Activated naive CD4-positive, alpha-beta T cell treated with anti-CD3 and anti-CD28 coated beads for 36 hours (primary cell): ENCODE measurements at regions of chr1 and their contacts with region 1.

Region 1: GRCh38 chr1:212857992-212858460 is at the start of gene FLVCR1:
- DNase-seq: peak; percentile 98
- H3K4me3 Mint-ChIP-seq: peak within 1 kb of the TSS; percentile 97
- H3K27ac Mint-ChIP-seq: peak within 1 kb of the TSS; percentile 88
- H3K4me1 Mint-ChIP-seq: peaks cover 11% of the 10 kb centered on the region
- H3K27me3 Mint-ChIP-seq: no peaks in the 10 kb centered on the region
- total RNA-seq, gene FLVCR1: 6.0 to 7.3 TPM

Region 2: GRCh38 chr1:211258756-211259637 is 1599.0 kb before region 1 on chr1 and contains the start of gene RCOR3:
- CTCF ChIA-PET with region 1: no interaction called
- intact Hi-C with region 1: loop called (anchors 2 kb)
- DNase-seq: peak; percentile 93
- H3K4me3 Mint-ChIP-seq: peak within 1 kb of the TSS; percentile 90
- H3K27ac Mint-ChIP-seq: peak within 1 kb of the TSS; percentile 96
- H3K4me1 Mint-ChIP-seq: peaks cover 16% of the 10 kb centered on the region
- H3K27me3 Mint-ChIP-seq: no peaks in the 10 kb centered on the region
- total RNA-seq, gene RCOR3: 28.9 to 30.8 TPM

Region 3: DNA sequence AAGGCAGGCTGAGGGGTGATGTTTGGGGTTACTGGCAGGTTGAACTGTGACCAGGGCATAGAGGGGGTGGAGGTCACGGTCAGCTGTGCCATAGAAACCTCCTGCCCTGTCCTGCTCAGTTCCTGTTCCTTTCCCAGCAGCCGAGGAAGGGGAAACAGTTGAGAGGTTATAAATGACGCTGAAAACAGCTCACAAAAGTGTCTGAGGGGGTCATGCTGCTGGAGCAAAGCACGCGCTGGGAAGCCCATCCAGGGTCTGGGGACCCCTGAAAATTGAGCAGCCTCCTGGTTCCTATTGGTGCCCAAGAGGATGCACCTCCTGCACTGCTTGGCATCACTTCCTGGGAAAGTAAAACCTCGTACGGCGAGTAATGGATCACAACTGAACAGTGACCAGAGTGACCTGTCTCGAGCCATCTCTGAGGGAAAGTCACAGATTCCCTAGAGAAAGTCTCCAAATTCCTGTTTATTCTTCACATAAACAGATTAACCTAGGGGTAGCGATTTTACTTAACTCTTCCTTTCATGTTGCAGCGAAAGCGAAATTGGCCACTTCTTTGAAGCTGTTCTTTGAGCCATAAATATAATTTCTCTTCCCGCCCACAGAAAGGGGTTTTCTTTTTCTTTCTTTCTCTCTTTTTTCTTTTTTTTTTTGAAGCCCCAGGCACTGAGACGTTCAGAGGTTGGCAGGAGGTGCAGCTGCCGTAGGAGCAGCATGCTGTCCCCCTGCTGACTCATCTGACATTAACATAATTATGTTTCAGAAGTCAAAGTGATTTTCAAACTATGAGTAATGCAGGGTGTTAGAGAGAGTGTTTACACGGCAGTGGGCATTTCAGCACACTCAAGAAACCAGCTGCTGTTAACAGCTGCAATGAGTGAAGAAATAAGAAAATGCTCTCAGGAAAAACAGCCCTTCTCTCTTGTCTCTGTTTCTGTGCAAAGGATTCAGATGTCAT is 291.2 kb before region 1 on chr1:
- CTCF ChIA-PET with region 1: no interaction called
- intact Hi-C with region 1: loop called (anchors 2 kb)
- DNase-seq: peak; percentile 80
- H3K4me3 Mint-ChIP-seq: peak overlapping the region; percentile 78
- H3K27ac Mint-ChIP-seq: peak overlapping the region; percentile 88
- H3K4me1 Mint-ChIP-seq: peaks cover 32% of the 10 kb centered on the region
- H3K27me3 Mint-ChIP-seq: no peaks in the 10 kb centered on the region

Region 4: DNA sequence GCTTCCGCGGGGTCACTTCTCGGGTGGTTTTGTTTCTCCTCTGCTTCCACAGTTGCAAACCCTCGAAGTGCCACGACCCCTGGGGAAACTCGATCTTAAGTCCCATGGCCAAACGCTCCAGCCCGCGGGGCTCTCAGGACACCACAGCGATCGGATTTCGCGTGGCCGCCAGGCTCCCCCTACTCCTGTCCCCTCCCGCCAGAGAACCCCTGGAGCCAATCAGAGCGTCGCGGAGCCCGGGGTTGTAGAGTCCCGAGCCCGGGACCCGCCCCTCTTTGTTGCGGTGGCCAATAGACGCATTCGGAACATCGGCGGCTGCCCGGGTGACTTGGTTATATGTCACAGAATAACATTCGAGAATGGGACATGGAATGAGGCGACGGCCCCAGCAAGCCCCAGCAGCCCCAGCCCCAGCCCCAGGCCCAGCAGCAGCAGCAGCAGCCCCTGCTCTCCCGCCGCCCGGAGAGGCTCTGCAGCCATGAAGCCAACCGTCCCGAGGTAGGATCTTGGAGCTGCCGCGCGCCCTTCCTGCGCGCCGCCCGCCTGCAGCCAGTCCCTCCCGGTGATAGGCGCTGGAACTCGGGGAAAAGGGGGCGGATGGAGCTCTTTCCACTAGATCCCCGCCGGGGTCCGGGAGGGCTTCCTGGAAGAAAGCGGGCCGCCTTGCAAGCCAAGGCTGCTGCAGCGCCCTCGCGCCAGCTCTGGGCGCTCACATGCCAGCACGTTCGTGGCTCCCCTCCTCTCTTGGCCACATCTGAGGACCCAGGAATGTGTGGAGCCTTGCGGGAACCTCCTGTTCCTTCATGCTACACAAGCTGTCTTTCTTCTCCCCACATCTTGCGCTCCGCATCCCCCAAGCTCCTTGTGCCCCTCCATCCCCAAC is 92.5 kb after region 1 on chr1 and contains the start of gene VASH2:
- CTCF ChIA-PET with region 1: no interaction called
- intact Hi-C with region 1: loop called (anchors 1 kb)
- DNase-seq: peak; percentile 80
- H3K4me3 Mint-ChIP-seq: peak within 1 kb of the TSS; percentile 77
- H3K27ac Mint-ChIP-seq: no peak within 1 kb of the TSS
- H3K4me1 Mint-ChIP-seq: peaks cover 8% of the 10 kb centered on the region
- H3K27me3 Mint-ChIP-seq: peaks cover 41% of the 10 kb centered on the region
- total RNA-seq, gene VASH2: 0.38 to 1.2 TPM

Region 5: DNA sequence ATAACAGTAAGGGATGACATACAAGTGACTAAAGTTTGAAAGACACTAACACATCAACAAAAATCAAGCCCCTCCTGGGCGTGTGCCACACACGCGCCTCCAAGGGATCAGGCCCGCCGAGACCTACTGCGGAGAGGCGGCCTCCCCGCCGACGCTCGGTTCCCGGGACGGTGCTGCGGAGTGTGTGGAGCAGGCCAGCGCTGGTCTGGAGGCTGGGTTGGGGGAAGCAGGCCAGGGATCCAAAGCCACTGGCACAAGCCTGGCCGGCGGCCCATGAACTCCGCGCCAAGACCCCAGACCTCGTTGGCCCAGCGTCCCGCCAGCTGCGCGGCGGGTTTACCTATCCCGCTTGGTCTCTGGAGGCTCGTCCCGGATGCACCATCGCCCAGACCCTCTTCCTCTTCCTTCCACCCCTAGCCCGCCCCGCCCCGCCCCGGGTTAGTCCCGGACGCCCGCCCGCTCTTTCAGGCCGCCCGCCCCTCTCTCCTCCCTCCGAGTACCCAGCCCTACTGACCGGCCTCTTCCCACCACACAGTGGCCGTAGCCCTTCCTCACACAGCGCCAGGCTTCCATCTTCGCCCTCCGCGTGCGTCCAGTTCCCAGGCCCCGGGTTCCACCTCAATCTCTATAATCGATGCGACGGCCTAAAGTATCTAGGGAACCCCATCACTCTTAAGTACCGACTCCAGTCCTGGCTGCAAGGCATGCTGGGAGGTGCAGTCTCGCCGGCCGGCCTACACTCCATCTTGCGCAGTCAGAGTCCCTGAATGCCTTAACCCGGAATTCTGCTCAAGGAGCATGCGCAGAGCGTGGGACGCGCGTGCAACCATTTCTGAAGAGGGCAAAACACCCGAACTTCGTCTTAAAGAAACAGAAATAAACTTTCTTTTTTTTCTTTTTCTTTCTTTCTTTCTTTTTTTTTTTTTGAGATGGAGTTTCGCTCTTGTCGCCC is 157.3 kb after region 1 on chr1 and contains the start of gene ANGEL2:
- CTCF ChIA-PET with region 1: interaction called, 3 read pairs
- intact Hi-C with region 1: loop called (anchors 1 kb)
- DNase-seq: peak; percentile 97
- H3K4me3 Mint-ChIP-seq: peak within 1 kb of the TSS; percentile 100
- H3K27ac Mint-ChIP-seq: peak within 1 kb of the TSS; percentile 99
- H3K4me1 Mint-ChIP-seq: peaks cover 27% of the 10 kb centered on the region
- H3K27me3 Mint-ChIP-seq: no peaks in the 10 kb centered on the region
- total RNA-seq, gene ANGEL2: 39.5 to 42.9 TPM

Region 6: GRCh38 chr1:214602764-214603657 is 1745.0 kb after region 1 on chr1 and contains the start of gene CENPF:
- CTCF ChIA-PET with region 1: no interaction called
- intact Hi-C with region 1: loop called (anchors 10 kb)
- DNase-seq: peak; percentile 97
- H3K4me3 Mint-ChIP-seq: peak within 1 kb of the TSS; percentile 97
- H3K27ac Mint-ChIP-seq: peak within 1 kb of the TSS; percentile 90
- H3K4me1 Mint-ChIP-seq: peaks cover 8% of the 10 kb centered on the region
- H3K27me3 Mint-ChIP-seq: no peaks in the 10 kb centered on the region
- total RNA-seq, gene CENPF: 116 to 128 TPM